OCI-LY7 (cell line): ENCODE measurements at regions of chr19 and their contacts with region 1.

Region 1: GRCh38 chr19:12847159-12848139 is 9.1 kb downstream of the MAST1 start:
- DNase-seq: peak; percentile 68
- H3K4me3 ChIP-seq: no peak overlapping the region
- H3K27ac ChIP-seq: no peak overlapping the region
- H3K4me1 ChIP-seq: no peaks in the 10 kb centered on the region
- CTCF ChIP-seq: peak; percentile 96

Region 2: DNA sequence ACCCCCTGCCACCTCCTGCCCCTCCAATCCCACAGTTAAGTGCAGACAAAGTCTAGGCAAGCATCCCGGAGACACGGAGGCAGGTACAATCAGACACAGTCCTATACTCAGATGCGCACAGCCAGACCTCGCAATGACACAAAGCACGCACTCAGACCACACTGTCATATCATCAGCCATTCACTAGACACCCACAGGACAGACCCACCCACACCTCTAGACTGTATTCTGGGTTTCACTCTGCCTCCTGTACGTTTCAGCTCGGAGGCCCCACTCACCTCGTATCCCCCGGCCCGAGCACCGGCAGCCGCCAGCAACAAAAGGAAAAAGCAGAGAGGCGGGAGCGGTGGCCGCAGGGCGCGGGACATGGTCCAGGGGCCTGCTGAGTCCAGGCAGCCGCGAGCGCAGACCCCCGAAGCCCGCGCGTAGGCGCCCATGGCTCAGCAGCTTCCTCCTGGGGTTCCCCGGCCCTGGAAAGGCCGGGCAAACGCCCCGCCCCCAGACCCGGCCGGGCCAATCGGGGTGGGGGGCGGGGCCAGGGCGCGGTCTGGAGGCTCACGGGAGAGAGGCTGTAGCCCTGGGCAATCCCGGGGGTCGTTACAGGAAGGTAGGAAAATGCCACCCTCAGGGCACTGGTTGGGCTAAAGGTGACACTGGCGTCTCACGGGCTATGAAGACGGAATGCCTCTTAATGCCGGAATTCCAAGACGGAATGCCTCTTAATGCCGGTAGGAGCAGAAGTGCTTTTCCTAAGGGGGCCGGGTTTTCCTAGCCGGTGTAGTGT is 181.0 kb before region 1 on chr19 and contains the starts of genes MAN2B1 and WDR83:
- CTCF ChIA-PET with region 1: no interaction called
- POLR2A ChIA-PET with region 1: no interaction called
- intact Hi-C with region 1: no loop called
- DNase-seq: peak; percentile 85
- H3K4me3 ChIP-seq: peak within 1 kb of the TSS; percentile 85
- H3K27ac ChIP-seq: peak within 1 kb of the TSS; percentile 71
- H3K4me1 ChIP-seq: peaks cover 42% of the 10 kb centered on the region
- CTCF ChIP-seq: no peak
- total RNA-seq, gene MAN2B1: 18.3 and 29.1 TPM in 2 replicates
- total RNA-seq, gene WDR83: 17.0 and 21.1 TPM in 2 replicates

Region 3: DNA sequence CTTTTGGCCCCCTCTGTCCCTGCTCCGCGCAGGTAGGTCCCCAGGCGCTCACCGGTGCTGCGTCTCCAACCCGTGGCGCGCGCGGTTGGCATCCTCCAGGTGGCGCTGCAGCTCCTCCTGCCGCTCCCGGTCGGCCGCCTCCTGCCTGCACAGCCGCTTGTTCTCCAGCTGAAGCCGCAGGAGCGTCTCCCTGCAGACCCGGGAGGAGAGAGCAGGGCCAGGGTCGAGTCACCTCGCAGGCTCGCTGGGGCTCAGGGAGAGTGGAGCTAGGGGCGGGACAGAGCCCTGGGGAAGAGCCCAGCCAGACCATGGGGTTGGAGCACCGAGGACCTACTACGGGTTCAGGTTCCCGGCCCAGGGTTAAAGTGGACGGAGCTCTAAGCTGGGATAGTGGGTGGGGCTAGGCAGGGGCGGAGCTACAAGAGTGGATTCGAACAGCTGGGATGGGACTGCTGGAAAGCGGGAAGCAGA is 81.4 kb before region 1 on chr19:
- CTCF ChIA-PET with region 1: no interaction called
- POLR2A ChIA-PET with region 1: no interaction called
- intact Hi-C with region 1: loop called (anchors 2 kb)
- DNase-seq: peak; percentile 77
- H3K4me3 ChIP-seq: peak overlapping the region; percentile 17
- H3K27ac ChIP-seq: no peak overlapping the region
- H3K4me1 ChIP-seq: no peaks in the 10 kb centered on the region
- CTCF ChIP-seq: peak; percentile 87

Region 4: GRCh38 chr19:12789904-12790619 is 57.4 kb before region 1 on chr19:
- CTCF ChIA-PET with region 1: no interaction called
- POLR2A ChIA-PET with region 1: no interaction called
- intact Hi-C with region 1: no loop called
- DNase-seq: peak; percentile 95
- H3K4me3 ChIP-seq: peak overlapping the region; percentile 84
- H3K27ac ChIP-seq: peak overlapping the region; percentile 77
- H3K4me1 ChIP-seq: peaks cover 54% of the 10 kb centered on the region
- CTCF ChIP-seq: no peak

Region 5: DNA sequence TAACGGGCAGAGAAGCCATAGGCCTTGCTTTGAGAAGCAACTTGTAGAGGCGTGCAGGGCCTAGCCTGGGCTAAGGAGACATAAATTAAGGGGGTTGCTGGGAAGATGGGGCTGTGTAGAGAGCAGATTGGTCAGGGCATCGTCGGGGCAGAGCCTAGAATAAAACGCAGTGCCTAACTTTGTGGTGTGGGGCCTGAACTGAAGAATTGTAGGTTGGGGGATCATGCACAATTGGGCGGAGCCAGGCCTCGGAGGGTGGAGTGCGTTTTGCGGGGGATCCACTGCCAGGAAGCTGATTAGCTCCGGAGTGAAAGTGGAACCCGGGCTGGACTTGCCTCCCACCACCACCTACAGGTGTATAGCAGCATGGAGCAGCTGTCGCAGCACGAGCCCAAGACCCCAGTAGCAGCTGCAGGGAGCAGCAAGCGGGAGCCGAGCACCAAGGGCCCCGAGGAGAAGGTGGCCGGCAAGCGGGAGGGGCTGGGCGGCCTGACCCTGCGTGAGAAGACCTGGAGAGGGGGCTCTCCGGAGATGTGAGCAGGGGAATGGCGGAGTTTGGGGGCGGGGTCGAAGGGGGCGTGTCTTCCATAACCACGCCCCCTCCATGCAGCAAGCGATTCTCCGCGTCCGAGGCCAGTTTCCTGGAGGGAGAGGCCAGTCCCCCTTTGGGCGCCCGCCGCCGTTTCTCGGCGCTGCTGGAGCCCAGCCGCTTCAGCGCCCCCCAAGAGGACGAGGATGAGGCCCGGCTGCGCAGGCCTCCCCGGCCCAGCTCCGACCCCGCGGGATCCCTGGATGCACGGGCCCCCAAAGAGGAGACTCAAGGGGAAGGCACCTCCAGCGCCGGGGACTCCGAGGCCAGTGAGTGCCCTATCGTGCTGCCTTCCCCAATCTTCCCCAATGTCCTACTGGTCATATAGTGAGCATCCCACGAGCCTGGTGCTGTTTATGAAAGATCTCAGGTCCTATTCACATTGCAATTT is 20.0 kb after region 1 on chr19:
- CTCF ChIA-PET with region 1: no interaction called
- POLR2A ChIA-PET with region 1: no interaction called
- intact Hi-C with region 1: no loop called
- DNase-seq: peak; percentile 78
- H3K4me3 ChIP-seq: peak overlapping the region; percentile 68
- H3K27ac ChIP-seq: peak overlapping the region; percentile 16
- H3K4me1 ChIP-seq: peaks cover 14% of the 10 kb centered on the region
- CTCF ChIP-seq: peak; percentile 44; the same call in 1 of the 2 replicates

Region 6: DNA sequence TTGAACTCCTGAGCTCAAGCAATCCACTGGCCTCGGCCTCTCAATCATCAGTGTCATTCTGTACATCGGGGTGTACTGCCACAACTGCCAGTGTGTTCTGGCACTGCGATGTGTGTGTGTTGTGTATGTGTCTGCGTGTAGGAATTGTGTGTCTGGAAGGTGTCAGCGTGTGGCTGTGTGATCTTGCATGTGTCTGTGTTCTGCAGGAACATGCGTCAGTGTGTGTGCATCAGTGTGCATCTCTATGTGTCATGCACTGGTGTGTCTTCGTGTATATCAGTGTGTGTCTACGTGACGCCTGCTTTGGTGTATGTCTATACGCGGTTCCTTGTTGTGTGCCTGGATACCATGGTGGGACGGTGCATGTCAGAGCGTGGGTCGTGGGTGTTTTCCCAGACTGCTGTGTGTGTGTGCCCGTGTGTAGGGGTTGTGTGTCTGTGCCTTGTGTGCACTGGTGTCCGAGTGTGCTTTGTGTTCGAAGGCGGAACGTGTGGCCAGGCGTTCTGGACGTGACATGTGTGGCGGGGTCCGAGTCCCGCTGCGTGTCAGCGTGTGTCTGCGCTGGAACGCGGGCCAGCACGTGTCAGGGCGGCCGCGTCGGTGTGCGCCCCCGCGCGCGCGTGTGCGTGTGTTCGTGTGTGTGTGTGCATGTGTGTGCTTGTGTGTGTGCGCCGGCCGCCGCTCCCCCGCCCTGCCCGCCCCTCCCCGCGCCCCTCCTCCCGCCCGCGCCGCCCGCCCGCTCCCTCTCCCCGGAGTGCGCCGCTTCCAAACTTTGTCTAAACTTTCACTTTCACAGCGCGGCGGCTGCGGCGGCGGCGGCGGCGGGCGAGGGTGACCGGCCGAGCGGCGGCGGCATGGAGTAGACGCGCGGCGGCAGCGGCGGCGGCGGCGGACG is 147.5 kb after region 1 on chr19 and contains the start of gene NFIX:
- CTCF ChIA-PET with region 1: no interaction called
- POLR2A ChIA-PET with region 1: no interaction called
- intact Hi-C with region 1: no loop called
- DNase-seq: peak; percentile 28
- H3K4me3 ChIP-seq: peak within 1 kb of the TSS; percentile 24
- H3K27ac ChIP-seq: no peak within 1 kb of the TSS
- H3K4me1 ChIP-seq: no peaks in the 10 kb centered on the region
- CTCF ChIP-seq: no peak
- total RNA-seq, gene NFIX: 0.03 and 0.16 TPM in 2 replicates